Activated naive CD4-positive, alpha-beta T cell treated with anti-CD3 and anti-CD28 coated beads, Interleukin-2, amount 10 ng/mL, durations not matched to agents 7 days and 5 days (primary cell): ENCODE measurements at regions of chr6 and their contacts with region 1.

Region 1: GRCh38 chr6:75208298-75209183 is 2.7 kb upstream of the COL12A1 start:
- DNase-seq: peak; percentile 88
- H3K4me3 Mint-ChIP-seq: peak overlapping the region; percentile 5
- H3K27ac Mint-ChIP-seq: peak overlapping the region; percentile 64
- H3K4me1 Mint-ChIP-seq: peaks cover 50% of the 10 kb centered on the region
- H3K27me3 Mint-ChIP-seq: peaks cover 73% of the 10 kb centered on the region

Region 2: DNA sequence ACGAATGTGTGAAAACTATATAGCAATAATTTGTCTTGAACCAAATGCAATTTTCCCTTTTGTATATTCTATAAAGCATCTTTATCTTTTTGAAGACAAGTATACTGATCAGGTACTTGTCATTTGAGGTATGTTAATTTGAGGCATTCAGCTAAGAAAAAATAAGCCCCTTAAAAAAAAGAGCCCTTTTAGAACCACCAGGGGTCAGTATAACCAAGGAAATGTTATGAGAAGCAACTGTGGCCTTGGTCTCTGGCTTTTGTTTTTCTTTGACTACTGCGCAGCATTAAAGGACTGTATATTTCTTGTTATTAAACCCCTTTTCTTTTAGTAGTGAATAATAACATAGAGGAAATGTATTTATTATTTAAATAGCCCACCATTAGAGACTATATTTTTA is 1469.4 kb before region 1 on chr6:
- CTCF ChIA-PET with region 1: interaction called, 27 read pairs
- DNase-seq: no peak
- H3K4me3 Mint-ChIP-seq: no peak overlapping the region
- H3K27ac Mint-ChIP-seq: no peak overlapping the region
- H3K4me1 Mint-ChIP-seq: no peaks in the 10 kb centered on the region
- H3K27me3 Mint-ChIP-seq: no peaks in the 10 kb centered on the region

Region 3: DNA sequence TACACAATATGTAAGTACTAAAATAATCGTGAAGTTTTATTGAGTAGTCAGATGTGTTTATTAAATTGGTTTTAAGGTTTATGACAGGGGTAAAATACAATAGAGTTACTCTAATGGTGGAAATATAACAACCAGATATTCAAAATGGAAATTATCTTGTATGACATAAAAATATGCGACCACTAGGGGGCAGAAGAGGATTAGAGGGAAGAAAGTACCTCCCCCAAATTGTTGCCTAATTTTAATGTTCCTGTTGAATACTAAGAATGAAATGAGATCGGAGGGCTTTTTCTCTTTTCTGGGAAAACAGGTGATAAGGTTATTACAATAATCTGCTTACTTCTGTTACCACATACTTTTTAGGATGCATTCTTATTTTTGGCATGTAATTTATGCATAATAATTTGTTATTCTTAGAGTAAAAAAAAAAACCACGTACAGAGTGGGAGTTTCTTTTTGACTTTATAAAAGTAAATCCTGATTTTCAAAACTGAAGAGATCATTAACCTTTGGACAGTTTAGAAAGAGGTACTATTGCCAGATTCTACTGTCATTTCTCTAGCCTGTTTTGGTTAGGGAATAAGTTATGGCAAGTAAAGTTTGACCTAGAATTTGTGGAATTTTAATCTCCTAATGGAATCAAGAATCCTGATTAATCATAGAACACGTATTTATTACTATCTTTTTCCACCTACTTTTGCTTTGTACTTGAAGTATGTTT is 1353.4 kb before region 1 on chr6:
- CTCF ChIA-PET with region 1: interaction called, 10 read pairs
- DNase-seq: no peak
- H3K4me3 Mint-ChIP-seq: no peak overlapping the region
- H3K27ac Mint-ChIP-seq: no peak overlapping the region
- H3K4me1 Mint-ChIP-seq: no peaks in the 10 kb centered on the region
- H3K27me3 Mint-ChIP-seq: no peaks in the 10 kb centered on the region

Region 4: DNA sequence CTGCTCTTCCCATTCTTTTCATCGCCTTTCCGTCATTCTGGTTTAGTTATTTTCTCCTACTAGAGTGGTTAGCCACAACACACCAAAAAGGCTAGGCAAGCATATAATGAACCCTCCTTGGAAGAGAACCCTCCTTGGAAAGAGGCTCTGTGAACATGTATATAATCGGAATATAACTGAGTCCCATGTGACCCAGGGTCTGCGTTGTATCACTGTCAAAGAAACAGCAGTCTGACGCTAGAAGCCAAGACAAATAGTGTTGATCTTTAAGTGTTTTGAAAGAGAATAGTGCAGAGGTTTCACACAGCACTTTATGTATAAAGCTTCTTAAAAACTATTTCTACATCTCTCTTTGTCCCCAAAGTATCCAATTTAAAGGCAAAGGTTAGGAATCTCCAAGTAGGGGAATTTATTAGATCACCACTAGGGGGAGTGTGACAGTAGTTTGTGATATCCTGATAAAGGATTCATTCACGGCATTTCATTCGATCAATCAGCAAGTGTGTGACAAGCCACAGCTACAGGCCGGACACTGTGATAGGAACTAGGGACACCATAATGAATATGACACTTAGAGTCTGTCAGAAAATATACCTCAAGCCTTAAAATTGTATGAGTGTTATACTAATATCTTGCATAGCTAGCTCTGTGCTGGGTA is 1117.3 kb before region 1 on chr6:
- CTCF ChIA-PET with region 1: interaction called, 42 read pairs
- DNase-seq: no peak
- H3K4me3 Mint-ChIP-seq: no peak overlapping the region
- H3K27ac Mint-ChIP-seq: no peak overlapping the region
- H3K4me1 Mint-ChIP-seq: no peaks in the 10 kb centered on the region
- H3K27me3 Mint-ChIP-seq: no peaks in the 10 kb centered on the region

Region 5: DNA sequence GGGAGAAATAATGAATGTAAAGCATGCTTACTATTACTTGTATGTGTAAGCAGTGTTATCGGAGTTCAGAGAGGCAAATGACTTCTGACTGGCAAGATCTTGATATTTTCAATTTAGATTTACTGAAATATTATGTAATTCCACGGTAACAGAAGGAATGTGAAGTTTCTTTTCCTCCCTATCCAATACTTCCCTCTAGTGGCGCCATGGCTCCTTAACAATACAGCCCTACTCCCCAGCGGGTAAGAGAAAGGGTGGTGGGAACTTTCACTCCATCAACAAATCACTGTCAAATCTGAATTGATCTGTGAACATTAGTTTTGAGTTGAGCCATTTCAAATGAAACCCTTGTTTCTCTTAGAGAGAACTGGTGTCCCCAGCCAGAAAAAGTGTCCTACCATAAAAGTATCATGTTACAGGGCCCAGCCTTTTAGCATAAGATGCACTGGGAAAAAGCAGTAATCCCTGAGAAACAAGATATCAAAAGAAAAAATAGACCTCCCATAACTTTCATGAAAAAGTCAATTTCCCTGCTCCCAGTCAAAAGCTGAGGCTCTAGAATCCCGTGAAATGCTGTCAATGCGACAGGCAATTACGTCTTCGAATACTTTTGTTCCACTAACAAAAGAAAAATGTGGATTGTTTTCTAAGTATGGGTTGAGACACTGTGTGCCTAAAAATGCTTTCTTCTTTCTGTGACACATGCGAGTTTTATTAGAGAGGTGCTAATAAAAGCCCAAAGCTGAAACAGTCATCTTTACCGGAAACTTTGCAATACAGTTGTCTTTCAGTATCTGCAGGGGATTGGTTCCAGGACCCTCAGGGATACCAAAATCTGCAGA is 22.2 kb after region 1 on chr6:
- CTCF ChIA-PET with region 1: interaction called, 15 read pairs
- DNase-seq: no peak
- H3K4me3 Mint-ChIP-seq: no peak overlapping the region
- H3K27ac Mint-ChIP-seq: no peak overlapping the region
- H3K4me1 Mint-ChIP-seq: no peaks in the 10 kb centered on the region
- H3K27me3 Mint-ChIP-seq: no peaks in the 10 kb centered on the region